ENCODE measurements at regions of chr5 and their contacts with region 1.

Region 1: DNA sequence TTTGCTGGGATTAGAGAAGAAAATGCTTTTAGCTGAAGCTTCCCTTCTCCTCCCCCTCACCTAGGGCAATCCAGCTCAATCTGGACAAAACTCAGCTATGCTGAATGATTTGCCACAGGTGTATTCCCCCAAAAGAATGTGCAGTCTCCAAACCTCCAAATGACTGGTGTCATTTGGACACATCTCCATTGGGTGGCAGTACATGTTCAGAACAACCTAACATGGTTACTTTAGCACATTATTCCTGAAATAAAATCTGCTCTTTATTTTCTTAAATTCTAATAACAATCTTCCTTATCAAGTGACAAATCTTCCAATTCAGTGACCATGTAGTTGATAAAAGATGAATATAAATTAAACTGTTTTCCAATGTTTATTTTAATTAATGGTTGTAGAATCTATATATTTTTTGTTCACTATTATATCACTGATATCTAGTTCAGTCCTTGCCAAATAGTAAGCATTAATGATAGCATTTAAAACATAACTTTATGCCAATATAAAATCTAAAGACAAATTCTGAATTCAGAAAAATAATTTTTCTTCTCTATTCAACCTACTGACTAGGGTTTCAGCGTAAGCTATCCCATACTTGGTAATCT is 61.3 kb upstream of the MOCS2 start:
- DNase-seq: peak; percentile 32
- ATAC-seq: peak; percentile 83
- H3K4me3 ChIP-seq: no peak overlapping the region
- H3K27ac ChIP-seq: no peak overlapping the region
- H3K4me1 ChIP-seq: no peaks in the 10 kb centered on the region
- H3K27me3 ChIP-seq: no peaks in the 10 kb centered on the region
- CTCF ChIP-seq: peak; percentile 54 to 74 (median 57); a peak in 5 of 6 replicates
- POLR2A ChIP-seq: no peak
- RAD21 ChIP-seq: peak; percentile 76

Region 2: DNA sequence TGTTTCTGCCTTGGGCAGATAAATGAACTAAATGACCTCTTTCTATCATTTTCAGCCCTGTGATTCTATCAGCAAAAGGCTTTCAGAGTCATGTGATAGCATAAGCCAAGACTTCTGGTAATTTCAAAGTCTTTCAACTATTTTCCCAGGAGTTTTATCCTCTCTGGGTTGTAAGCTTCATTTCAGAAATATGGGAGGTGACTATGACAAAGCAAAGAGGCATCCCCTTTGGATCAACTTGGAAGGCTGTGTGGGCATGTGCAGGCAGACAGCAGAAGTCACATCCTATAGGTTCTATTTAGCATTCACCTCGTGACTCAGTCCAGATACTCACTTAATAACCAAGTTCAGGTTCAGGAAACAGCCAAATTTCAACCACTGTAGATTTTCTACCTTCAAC is 160.6 kb after region 1 on chr5:
- CTCF ChIA-PET with region 1: no interaction called
- POLR2A ChIA-PET with region 1: no interaction called
- RAD21 ChIA-PET with region 1: no interaction called
- intact Hi-C with region 1: no loop called
- DNase-seq: no peak
- ATAC-seq: no peak
- H3K4me3 ChIP-seq: no peak overlapping the region
- H3K27ac ChIP-seq: no peak overlapping the region
- H3K4me1 ChIP-seq: no peaks in the 10 kb centered on the region
- H3K27me3 ChIP-seq: no peaks in the 10 kb centered on the region
- CTCF ChIP-seq: no peak
- POLR2A ChIP-seq: no peak
- RAD21 ChIP-seq: no peak

Region 3: DNA sequence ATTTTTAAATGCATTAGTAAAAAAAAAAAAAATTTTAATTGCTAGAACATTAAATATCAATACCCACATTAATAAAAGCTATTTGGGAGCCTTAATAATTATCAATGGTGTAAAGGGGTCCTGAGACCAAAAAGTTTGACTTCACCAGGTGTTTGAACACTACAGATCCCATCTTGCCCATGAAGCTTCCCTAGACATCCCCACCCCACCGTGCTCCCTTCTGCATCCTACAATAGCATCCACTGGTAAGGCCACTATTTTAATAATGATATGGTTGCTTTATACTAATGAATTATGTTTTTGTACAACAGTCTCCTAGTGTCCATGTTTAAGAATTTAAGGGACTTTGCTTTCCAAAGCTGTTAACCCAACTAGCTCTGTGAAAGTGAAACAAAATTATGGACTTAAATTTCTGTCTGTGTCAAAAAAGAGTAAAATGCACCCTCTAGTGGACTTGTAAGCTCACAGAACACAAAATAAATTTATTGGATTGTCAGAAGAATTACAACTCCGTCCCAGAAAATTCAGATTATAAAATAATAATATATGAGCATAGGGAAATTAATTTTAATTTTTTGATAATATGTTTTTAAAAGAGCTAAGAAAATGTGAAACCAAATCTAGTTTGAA is 1063.6 kb after region 1 on chr5:
- CTCF ChIA-PET with region 1: interaction called, 4 read pairs
- POLR2A ChIA-PET with region 1: no interaction called
- RAD21 ChIA-PET with region 1: no interaction called
- intact Hi-C with region 1: loop called (anchors 5 kb)
- DNase-seq: no peak
- ATAC-seq: no peak
- H3K4me3 ChIP-seq: no peak overlapping the region
- H3K27ac ChIP-seq: no peak overlapping the region
- H3K4me1 ChIP-seq: no peaks in the 10 kb centered on the region
- H3K27me3 ChIP-seq: no peaks in the 10 kb centered on the region
- CTCF ChIP-seq: peak; percentile 28 to 59 (median 36); a peak in 4 of 6 replicates
- POLR2A ChIP-seq: no peak
- RAD21 ChIP-seq: peak; percentile 38

Measured in HCT116 (cell line).